Activated B cell treated with CpG ODN at 0.5 μM for 24 hours (primary cell): ENCODE measurements at regions of chr12 and their contacts with region 1.

Region 1: DNA sequence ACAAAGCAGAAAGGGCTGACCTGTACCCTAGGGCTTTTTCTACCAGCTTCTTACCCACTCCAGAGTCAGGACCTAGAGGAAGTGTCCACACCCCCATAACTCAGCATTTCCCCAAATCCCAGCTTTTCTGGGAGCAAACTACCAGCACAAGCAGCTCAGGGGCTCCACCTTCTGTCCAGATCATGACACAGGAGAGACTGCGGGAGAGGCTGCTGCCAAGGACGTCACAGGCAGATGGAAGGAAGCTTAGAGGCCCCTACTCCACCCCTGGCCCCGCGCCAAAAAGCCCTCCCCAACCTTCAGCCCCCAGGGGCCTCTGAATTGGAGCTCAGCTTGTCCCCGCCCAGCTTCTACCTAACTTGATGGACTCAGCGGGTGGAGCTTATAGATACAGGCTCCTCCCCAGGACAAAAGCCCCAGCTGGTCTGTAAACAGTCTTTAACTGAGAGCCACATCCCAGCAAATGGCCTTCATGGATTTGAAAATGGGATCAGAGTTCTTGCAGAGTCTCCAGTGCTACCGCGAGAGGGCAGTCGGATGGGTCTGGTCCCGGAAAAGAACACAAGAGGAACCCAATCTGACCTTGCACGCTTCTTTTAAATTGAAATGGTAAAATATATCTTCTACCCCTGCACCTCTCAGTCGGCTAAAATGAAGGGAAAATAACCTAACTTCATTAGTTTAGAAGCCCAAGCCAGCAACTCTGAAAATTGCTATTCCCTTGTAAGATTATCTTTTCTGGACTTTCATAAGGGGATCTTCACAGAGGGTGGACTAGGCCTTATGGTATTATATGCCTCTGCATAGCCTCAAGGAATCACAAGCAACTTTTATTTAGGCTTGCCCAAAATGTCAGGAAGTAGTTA is 6.8 kb upstream of the BAZ2A start:
- DNase-seq: peak; percentile 95
- ATAC-seq: peak; percentile 64
- H3K4me3 Mint-ChIP-seq: peak overlapping the region; percentile 96
- H3K27ac Mint-ChIP-seq: peak overlapping the region; percentile 97
- H3K4me1 Mint-ChIP-seq: peaks cover 64% of the 10 kb centered on the region
- H3K27me3 Mint-ChIP-seq: no peaks in the 10 kb centered on the region
- CTCF ChIP-seq: no peak

Region 2: GRCh38 chr12:56333679-56334489 is 303.0 kb before region 1 on chr12 and contains the start of gene PAN2:
- CTCF ChIA-PET with region 1: no interaction called
- POLR2A ChIA-PET with region 1: no interaction called
- intact Hi-C with region 1: loop called (anchors 10 kb)
- DNase-seq: peak; percentile 85
- ATAC-seq: peak; percentile 91
- H3K4me3 Mint-ChIP-seq: peak within 1 kb of the TSS; percentile 96
- H3K27ac Mint-ChIP-seq: peak within 1 kb of the TSS; percentile 100
- H3K4me1 Mint-ChIP-seq: peaks cover 46% of the 10 kb centered on the region
- H3K27me3 Mint-ChIP-seq: no peaks in the 10 kb centered on the region
- CTCF ChIP-seq: no peak
- total RNA-seq, gene PAN2: 86.3 and 98.9 TPM in 2 replicates

Region 3: GRCh38 chr12:56601503-56601902 is 35.4 kb before region 1 on chr12:
- CTCF ChIA-PET with region 1: interaction called, 25 read pairs
- POLR2A ChIA-PET with region 1: interaction called, 5 read pairs
- intact Hi-C with region 1: loop called (anchors 1 kb)
- DNase-seq: no peak
- ATAC-seq: peak; percentile 57
- H3K4me3 Mint-ChIP-seq: no peak overlapping the region
- H3K27ac Mint-ChIP-seq: peak overlapping the region; percentile 41
- H3K4me1 Mint-ChIP-seq: no peaks in the 10 kb centered on the region
- H3K27me3 Mint-ChIP-seq: no peaks in the 10 kb centered on the region
- CTCF ChIP-seq: no peak

Region 4: DNA sequence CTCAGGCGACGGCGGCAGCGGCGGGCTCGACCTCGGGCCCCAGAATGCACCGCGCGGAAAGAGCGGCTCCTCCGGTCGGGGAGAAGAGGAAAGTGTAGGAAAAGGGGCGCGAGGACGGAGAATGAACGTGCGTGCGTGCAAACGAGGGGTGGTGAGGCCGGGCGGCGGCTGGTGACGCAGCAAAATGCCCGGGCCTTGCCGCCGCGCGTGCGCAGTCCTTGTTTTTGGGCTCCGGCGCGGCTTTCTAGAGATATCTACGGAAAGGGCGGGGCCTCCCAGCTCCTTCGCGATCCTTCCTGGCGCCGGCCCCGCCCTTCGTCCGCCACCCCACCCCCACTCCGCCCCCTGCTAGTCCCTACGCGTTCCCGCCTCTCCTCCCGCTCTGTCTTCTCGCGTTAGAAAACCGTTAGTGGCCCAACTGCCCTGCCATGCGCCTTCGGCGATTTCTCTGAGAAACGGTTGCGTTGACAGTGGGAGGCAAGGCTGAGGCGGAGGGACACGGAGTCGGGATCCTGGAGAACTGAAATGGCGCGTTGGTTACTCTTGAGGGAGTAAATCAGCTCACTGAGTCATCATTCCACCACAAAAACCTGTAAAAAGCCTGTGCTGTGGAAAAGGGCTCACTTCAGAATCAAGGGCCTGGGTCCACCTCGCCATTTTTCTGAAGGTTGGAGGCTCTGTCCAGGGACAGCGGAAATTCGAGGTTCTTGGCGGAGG is 51.4 kb after region 1 on chr12 and contains the start of gene PTGES3:
- CTCF ChIA-PET with region 1: interaction called, 15 read pairs
- POLR2A ChIA-PET with region 1: interaction called, 93 read pairs
- intact Hi-C with region 1: loop called (anchors 1 kb)
- DNase-seq: peak; percentile 97
- ATAC-seq: peak; percentile 75
- H3K4me3 Mint-ChIP-seq: peak within 1 kb of the TSS; percentile 100
- H3K27ac Mint-ChIP-seq: peak within 1 kb of the TSS; percentile 99
- H3K4me1 Mint-ChIP-seq: peaks cover 36% of the 10 kb centered on the region
- H3K27me3 Mint-ChIP-seq: no peaks in the 10 kb centered on the region
- CTCF ChIP-seq: no peak
- total RNA-seq, gene PTGES3: 183 and 185 TPM in 2 replicates

Region 5: DNA sequence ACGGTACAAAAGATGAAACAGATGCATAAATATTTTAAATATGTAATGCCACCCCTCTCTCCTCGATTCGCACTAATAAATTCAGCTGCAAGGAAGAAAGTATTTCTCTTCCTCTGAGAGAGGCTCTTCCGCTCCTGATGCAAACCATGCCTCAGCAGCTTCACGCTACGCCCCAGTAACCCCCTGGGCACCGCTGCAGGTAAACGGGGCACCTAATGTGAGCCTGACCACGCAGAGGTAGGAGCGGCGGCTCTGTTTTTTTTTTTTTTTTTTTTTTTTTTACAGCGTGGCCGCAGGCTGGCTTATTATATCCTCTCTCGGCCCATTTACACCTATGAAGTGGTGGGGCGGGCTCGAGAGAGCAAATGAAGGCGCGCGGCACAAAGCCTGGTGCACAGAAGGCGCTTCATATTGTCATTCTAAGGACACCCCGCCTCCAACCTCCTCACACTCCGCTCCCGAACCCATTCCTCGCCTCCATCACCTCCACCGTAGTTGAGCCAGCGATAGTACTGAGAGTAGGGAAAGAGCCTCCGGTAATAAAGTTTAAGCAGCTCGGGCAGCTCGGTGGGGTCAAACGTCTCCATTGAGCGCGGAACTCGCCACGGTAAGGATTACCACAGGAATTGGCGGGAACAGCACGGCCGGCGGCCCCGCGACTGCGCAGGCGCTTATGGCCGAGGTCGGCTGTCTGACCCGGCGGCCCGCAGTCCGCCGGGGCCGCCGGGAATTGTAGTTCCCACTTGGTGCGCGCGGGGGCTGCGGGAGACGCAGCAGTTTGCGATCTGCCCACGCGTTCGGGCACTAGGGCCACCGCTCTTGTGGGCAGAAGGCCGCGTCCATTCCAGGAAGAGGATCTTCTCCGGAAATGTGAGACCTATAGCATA is 115.0 kb after region 1 on chr12 and contains the start of gene PRIM1:
- CTCF ChIA-PET with region 1: interaction called, 3 read pairs
- POLR2A ChIA-PET with region 1: interaction called, 8 read pairs
- intact Hi-C with region 1: loop called (anchors 2 kb)
- DNase-seq: peak; percentile 81
- ATAC-seq: peak; percentile 83
- H3K4me3 Mint-ChIP-seq: peak within 1 kb of the TSS; percentile 96
- H3K27ac Mint-ChIP-seq: peak within 1 kb of the TSS; percentile 94
- H3K4me1 Mint-ChIP-seq: peaks cover 43% of the 10 kb centered on the region
- H3K27me3 Mint-ChIP-seq: no peaks in the 10 kb centered on the region
- CTCF ChIP-seq: no peak
- total RNA-seq, gene PRIM1: 15.1 and 16.8 TPM in 2 replicates